ENCODE measurements at regions of chr3 and their contacts with region 1.

Region 1: GRCh38 chr3:150488867-150489266 is 57.4 kb downstream of the SERP1 start:
- DNase-seq: no peak
- ATAC-seq: peak in 1 of 4 donors; percentile 71
- H3K4me3 ChIP-seq: no peak overlapping the region
- H3K27ac ChIP-seq: no peak overlapping the region
- H3K4me1 ChIP-seq: peaks cover 10% of the 10 kb centered on the region
- H3K27me3 ChIP-seq: no peaks in the 10 kb centered on the region
- CTCF ChIP-seq: no peak

Region 2: DNA sequence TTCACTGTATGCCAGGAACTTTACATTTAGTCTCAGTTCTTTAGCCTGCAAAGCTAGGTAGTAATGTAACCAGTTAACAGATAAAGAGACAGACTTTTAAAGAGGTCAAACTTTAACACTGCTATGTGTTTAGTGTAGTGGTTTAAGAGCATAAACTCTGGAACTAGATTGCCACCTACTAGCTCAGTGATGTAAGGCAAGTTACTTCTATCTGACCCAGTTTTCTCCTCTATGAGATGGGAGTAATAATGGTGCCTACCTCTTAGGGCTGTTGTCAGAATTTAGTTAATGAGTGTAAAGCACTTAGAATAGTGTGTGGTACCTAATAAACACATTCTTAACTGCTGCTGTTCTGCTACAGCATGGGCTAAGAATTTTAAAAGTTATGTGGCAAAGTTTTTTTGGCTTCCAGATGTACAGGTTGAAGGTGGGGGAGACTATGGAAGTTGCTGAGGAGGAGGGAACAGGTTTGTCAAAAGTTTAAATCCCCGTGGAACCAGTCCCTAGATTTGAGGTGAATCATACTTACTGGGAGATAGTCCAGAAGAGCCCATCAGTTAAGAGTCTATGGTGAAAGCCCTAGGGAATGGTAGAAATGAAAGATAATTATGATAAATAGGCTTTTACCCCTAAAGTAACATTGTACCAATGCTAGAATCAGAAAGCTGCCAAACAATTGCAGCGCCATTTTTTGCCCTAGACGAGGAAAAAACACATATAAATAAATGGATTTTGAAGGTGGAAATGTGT is 66.9 kb before region 1 on chr3:
- intact Hi-C with region 1: loop called in 1 of 2 experiments (anchors 2 kb)
- DNase-seq: no peak
- ATAC-seq: peak in 2 of 4 donors; percentile 48 to 63
- H3K4me3 ChIP-seq: no peak overlapping the region
- H3K27ac ChIP-seq: no peak overlapping the region
- H3K4me1 ChIP-seq: peaks cover 45% of the 10 kb centered on the region
- H3K27me3 ChIP-seq: no peaks in the 10 kb centered on the region
- CTCF ChIP-seq: no peak